Caco-2 (cell line): ENCODE measurements at regions of chr4 and their contacts with region 1.

Region 1: GRCh38 chr4:53592686-53593501 is 1.6 kb upstream of the LNX1 start:
- DNase-seq: peak; percentile 73 to 82
- H3K4me3 ChIP-seq: peak overlapping the region; percentile 35
- H3K4me3 Mint-ChIP-seq: peak overlapping the region; percentile 82
- H3K27ac Mint-ChIP-seq: peak overlapping the region; percentile 87
- H3K4me1 ChIP-seq: peaks cover 33% of the 10 kb centered on the region
- H3K4me1 Mint-ChIP-seq: peaks cover 32% of the 10 kb centered on the region
- H3K27me3 ChIP-seq: no peaks in the 10 kb centered on the region
- H3K27me3 Mint-ChIP-seq: no peaks in the 10 kb centered on the region
- CTCF ChIP-seq: no peak

Region 2: GRCh38 chr4:53196882-53197771 is 395.8 kb before region 1 on chr4:
- CTCF ChIA-PET with region 1: no interaction called
- POLR2A ChIA-PET with region 1: no interaction called
- intact Hi-C with region 1: loop called (anchors 5 kb)
- DNase-seq: peak in 1 of 2 experiments; percentile 59
- H3K4me3 ChIP-seq: no peak overlapping the region
- H3K4me3 Mint-ChIP-seq: no peak overlapping the region
- H3K27ac Mint-ChIP-seq: no peak overlapping the region
- H3K4me1 ChIP-seq: no peaks in the 10 kb centered on the region
- H3K4me1 Mint-ChIP-seq: peaks cover 3% of the 10 kb centered on the region
- H3K27me3 ChIP-seq: no peaks in the 10 kb centered on the region
- H3K27me3 Mint-ChIP-seq: no peaks in the 10 kb centered on the region
- CTCF ChIP-seq: peak; percentile 61 to 66

Region 3: DNA sequence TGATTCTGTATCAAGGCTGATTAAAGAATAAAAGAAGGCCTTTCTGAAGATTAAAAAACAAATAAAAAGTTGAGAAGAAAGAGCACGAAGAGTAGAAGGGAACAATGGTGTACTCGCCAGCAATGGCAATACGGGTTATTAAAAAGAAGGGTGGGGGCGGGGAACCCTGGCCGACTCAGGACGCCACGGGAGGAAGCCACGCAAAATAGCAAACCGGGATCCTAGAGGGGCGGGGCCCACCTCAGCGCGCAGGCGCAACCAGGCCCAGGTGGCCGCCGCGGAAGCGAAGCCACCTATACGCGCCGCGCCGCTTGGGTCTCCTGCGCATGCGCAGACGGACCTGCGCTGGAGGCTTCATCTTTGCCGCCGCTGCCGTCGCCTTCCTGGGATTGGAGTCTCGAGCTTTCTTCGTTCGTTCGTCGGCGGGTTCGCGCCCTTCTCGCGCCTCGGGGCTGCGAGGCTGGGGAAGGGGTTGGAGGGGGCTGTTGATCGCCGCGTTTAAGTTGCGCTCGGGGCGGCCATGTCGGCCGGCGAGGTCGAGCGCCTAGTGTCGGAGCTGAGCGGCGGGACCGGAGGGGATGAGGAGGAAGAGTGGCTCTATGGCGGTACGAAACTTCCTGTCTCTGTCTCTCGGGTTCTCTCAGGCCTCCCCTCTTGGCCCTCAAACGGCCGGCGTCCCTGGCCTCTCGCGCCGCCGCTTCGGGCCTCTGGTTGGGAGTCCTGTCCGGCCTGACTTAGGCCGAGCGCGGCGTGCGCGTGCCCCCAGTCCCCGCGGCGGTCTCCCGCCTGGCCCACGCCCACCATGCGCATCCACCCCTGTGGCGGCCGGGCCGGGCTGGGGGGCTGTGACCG is 215.3 kb before region 1 on chr4 and contains the start of gene FIP1L1:
- CTCF ChIA-PET with region 1: no interaction called
- POLR2A ChIA-PET with region 1: no interaction called
- intact Hi-C with region 1: loop called (anchors 5 kb)
- DNase-seq: peak; percentile 93 to 96
- H3K4me3 ChIP-seq: peak within 1 kb of the TSS; percentile 78
- H3K4me3 Mint-ChIP-seq: peak within 1 kb of the TSS; percentile 98
- H3K27ac Mint-ChIP-seq: peak within 1 kb of the TSS; percentile 98
- H3K4me1 ChIP-seq: peaks cover 14% of the 10 kb centered on the region; the same call in 1 of the 2 replicates
- H3K4me1 Mint-ChIP-seq: peaks cover 16% of the 10 kb centered on the region
- H3K27me3 ChIP-seq: no peaks in the 10 kb centered on the region
- H3K27me3 Mint-ChIP-seq: no peaks in the 10 kb centered on the region
- CTCF ChIP-seq: no peak
- total RNA-seq, gene FIP1L1: 62.5 and 69.4 TPM in 2 replicates

Region 4: GRCh38 chr4:53476232-53477037 is 116.5 kb before region 1 on chr4:
- CTCF ChIA-PET with region 1: interaction called, 3 read pairs
- POLR2A ChIA-PET with region 1: interaction called, 7 read pairs
- intact Hi-C with region 1: loop called (anchors 5 kb)
- DNase-seq: peak; percentile 66 to 73
- H3K4me3 ChIP-seq: peak overlapping the region; percentile 17
- H3K4me3 Mint-ChIP-seq: peak overlapping the region; percentile 70
- H3K27ac Mint-ChIP-seq: peak overlapping the region; percentile 79
- H3K4me1 ChIP-seq: peaks cover 37% of the 10 kb centered on the region
- H3K4me1 Mint-ChIP-seq: peaks cover 20% of the 10 kb centered on the region
- H3K27me3 ChIP-seq: no peaks in the 10 kb centered on the region
- H3K27me3 Mint-ChIP-seq: no peaks in the 10 kb centered on the region
- CTCF ChIP-seq: no peak

Region 5: DNA sequence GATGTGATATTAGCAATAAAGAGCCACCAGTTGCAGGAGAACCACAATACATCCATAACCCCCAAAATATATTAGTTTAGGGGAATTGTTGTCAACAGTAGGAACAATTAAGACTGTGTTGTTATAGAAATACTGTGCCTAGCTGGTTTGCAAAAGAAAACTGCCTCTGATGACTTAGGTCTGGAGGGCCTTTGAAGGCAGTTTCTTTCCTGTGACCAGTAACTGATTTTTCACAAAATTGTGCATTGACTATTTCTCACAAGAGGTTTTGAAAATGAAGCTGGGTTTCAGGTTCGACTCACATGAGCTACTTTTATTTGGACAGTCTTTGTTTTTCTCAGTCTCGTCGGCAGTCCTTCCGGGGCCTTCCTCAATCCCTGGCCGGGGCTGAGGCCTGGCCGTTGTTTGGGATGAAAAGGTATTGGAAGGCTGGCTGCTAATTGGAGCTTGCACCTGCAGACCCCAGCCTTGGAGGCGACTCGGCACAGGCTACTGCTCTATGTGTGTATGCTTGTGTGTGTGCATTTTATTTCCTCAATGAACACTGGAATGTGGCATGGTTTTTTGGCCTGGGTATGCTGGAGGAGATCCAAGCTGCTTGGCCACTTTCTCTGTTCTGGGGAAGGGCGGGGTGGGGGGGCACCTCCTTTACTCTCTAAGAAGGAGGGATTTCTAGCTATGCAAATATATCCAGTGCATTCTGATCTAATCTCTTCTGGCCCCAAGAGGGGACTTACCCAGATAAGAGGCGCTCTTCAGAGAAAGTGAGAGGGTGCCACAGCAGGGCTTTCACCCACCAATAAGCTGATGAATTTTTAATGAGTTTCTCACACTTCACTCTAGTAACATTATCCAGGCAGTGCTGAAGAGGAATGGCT is 47.9 kb after region 1 on chr4:
- CTCF ChIA-PET with region 1: no interaction called
- POLR2A ChIA-PET with region 1: no interaction called
- intact Hi-C with region 1: loop called (anchors 2 kb)
- DNase-seq: peak; percentile 9 to 40
- H3K4me3 ChIP-seq: no peak overlapping the region
- H3K4me3 Mint-ChIP-seq: no peak overlapping the region
- H3K27ac Mint-ChIP-seq: no peak overlapping the region
- H3K4me1 ChIP-seq: peaks cover 39% of the 10 kb centered on the region
- H3K4me1 Mint-ChIP-seq: peaks cover 16% of the 10 kb centered on the region
- H3K27me3 ChIP-seq: no peaks in the 10 kb centered on the region
- H3K27me3 Mint-ChIP-seq: no peaks in the 10 kb centered on the region
- CTCF ChIP-seq: no peak